Activated naive CD4-positive, alpha-beta T cell treated with anti-CD3 and anti-CD28 coated beads for 36 hours (primary cell): ENCODE measurements at regions of chr3 and their contacts with region 1.

Region 1: DNA sequence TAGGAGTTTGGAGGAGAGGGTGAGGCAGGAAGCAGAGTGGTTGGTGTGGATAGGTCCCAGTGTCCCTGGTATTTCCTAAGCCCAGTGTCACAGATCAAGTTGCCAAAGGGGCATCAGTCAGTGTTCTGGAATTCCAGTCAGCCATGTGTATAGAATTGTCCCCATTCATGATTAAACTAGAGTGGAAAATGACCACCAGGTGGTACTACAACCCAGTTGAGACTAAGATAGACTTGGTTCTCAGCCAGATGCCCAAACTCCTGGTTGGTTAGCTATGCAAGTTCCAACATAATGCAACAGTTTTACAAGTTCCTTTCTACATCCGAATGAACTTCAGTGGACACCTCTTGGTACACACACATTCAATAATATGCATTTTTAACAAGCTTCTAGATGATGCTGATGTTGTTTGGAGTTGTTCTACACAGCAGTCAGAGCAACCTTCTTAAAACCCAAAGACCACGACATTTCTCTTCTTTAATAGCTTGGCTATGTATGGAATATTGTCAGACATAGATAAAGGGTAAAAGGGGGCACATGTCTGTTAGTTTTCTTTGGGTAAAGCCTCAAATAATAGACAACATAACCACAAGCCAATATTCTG is 8.4 kb upstream of the ATR start:
- DNase-seq: peak; percentile 40
- H3K4me3 Mint-ChIP-seq: no peak overlapping the region
- H3K27ac Mint-ChIP-seq: no peak overlapping the region
- H3K4me1 Mint-ChIP-seq: no peaks in the 10 kb centered on the region
- H3K27me3 Mint-ChIP-seq: peaks cover 5% of the 10 kb centered on the region

Region 2: GRCh38 chr3:142628801-142629200 is 41.9 kb after region 1 on chr3:
- CTCF ChIA-PET with region 1: no interaction called
- intact Hi-C with region 1: no loop called
- DNase-seq: no peak
- H3K4me3 Mint-ChIP-seq: no peak overlapping the region
- H3K27ac Mint-ChIP-seq: no peak overlapping the region
- H3K4me1 Mint-ChIP-seq: peaks cover 5% of the 10 kb centered on the region
- H3K27me3 Mint-ChIP-seq: no peaks in the 10 kb centered on the region

Region 3: DNA sequence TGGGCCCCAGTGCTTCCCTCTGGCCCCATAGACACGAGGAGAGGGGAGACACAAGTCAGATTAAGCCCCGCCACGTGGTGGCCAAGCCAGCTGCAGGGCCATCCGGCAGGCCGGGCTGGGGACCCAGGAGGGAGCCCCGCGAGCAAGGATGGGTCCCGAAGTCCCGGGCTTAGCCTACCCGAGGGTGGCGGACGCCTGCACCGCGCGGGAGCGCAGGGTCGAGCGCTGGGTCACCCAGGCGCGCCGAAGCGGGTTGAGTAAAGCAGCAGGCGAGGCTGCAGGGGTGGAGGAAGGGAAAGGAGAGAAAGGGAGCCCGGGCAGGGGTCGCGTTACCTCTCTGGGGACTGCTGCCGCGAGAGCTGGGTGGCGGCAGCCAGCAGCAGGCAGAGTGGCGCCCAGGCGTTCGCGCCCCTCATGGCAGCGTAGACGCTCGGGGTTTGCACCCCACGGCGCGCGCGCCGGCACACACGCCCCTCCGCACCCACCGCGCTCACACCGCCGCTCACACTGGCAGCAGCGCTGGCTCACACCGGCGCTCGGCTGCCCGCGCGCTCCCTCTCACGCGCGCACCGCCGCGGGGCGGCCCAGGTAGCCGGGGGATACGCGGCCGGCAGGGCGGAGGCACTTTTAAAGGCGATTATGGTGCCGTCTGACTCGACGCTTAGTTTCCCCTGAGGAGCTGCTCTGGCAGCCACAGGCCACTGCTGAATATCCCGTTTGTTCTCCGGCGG is 301.7 kb after region 1 on chr3 and contains the start of gene PCOLCE2:
- CTCF ChIA-PET with region 1: interaction called, 3 read pairs
- intact Hi-C with region 1: loop called (anchors 5 kb)
- DNase-seq: peak; percentile 11
- H3K4me3 Mint-ChIP-seq: peak within 1 kb of the TSS; percentile 66
- H3K27ac Mint-ChIP-seq: no peak within 1 kb of the TSS
- H3K4me1 Mint-ChIP-seq: peaks cover 5% of the 10 kb centered on the region
- H3K27me3 Mint-ChIP-seq: peaks cover 44% of the 10 kb centered on the region
- total RNA-seq, gene PCOLCE2: 0.38 to 0.64 TPM

Region 4: DNA sequence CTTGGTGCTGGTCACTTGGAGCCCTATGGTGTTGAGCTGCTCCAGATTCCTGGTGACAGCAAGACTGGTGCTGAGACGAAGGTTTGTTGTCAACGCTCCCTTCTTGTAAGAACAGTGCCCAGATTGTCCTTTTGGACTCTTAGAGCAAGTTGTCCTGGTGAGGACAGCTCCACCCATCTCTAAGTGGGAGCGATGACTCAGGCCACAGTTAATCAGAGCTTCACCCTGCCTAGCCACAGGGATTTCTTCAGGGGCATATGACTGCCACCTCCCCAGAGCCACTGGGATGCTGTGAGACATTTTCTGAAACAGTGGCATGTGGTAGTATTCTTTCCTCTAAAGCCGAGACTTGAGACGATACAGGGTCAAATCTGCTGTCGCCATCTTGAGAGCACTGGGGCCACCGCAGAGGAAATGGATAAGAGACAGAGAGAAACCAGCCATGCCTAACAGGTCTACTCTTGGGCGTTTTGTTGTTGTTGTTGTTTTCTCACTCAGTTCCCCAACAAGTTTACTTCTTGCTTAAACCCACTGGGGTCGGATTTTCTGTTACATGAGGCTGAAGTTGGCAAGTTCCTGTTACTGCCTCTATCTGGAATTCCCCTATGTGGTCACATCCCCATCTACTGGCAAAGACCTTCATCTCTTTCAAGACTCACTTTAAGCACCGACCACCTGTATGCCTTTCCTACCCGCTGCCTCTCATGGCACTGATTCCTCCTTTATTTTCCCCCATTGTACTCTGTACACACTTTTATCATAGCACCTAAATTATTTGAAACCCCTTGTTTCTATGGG is 317.9 kb after region 1 on chr3:
- CTCF ChIA-PET with region 1: no interaction called
- intact Hi-C with region 1: loop called (anchors 5 kb)
- DNase-seq: peak; percentile 16
- H3K4me3 Mint-ChIP-seq: no peak overlapping the region
- H3K27ac Mint-ChIP-seq: no peak overlapping the region
- H3K4me1 Mint-ChIP-seq: peaks cover 8% of the 10 kb centered on the region
- H3K27me3 Mint-ChIP-seq: peaks cover 16% of the 10 kb centered on the region

Region 5: DNA sequence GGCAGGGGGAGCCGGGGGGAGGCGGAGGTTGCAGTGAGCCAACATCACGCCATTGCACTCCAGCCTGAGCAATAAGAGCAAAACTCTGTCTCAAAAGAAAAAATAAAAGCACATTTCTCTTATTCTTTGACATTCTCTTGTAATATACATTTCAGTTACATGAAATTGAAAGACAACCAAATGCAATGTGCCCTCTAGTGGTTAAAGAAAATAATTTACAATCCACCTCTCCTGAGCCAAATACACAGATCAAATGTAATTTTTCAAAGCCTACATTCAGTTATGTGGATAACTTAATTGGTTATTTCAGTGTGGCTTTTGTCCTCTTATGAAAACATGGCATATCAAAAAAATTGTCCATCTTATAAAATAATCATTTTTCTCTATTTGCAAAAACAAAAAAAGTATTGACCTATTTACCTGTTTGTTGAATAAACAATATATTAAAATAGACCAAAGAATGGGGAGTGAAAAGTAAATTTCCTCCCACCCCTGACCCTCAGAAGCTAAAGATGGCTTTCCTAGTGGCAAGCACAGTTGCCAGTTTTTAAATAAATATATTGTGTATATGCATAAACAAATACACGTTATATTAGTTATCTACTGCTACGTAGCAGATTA is 400.3 kb after region 1 on chr3:
- CTCF ChIA-PET with region 1: interaction called, 4 read pairs
- intact Hi-C with region 1: loop called (anchors 2 kb)
- DNase-seq: no peak
- H3K4me3 Mint-ChIP-seq: no peak overlapping the region
- H3K27ac Mint-ChIP-seq: no peak overlapping the region
- H3K4me1 Mint-ChIP-seq: no peaks in the 10 kb centered on the region
- H3K27me3 Mint-ChIP-seq: no peaks in the 10 kb centered on the region

Region 6: GRCh38 chr3:142993958-142994442 is 407.1 kb after region 1 on chr3:
- CTCF ChIA-PET with region 1: interaction called, 4 read pairs
- intact Hi-C with region 1: loop called (anchors 1 kb)
- DNase-seq: peak; percentile 77
- H3K4me3 Mint-ChIP-seq: no peak overlapping the region
- H3K27ac Mint-ChIP-seq: no peak overlapping the region
- H3K4me1 Mint-ChIP-seq: no peaks in the 10 kb centered on the region
- H3K27me3 Mint-ChIP-seq: peaks cover 4% of the 10 kb centered on the region

Region 7: DNA sequence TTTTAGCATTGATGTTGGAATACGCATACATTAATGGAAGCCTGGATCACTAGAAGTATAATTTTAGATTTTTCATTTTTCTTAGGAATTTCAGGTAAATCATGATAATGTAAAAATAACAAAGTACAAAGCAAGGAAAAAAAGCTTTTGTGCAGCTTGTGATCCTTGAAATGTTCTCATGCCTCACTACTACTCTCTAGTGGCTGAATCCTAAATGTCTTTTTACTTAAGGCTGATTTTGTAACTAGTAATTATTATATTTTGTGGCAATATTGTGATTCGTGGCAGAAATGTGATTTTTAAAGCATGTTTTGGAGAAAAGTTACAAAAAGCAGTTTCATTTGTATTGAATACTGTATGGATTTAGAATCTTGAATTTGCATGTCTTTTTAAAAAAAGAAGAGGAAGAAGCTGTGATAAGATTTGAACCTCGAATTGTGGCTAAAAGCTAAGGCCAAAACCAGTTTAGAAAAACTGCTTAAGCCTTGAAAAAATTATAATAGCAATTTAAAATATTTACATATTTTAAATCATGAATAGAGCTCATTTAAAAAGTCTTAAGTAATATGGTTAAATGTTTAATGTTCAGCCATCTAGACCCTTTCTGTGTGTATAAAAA is 453.5 kb after region 1 on chr3:
- CTCF ChIA-PET with region 1: no interaction called
- intact Hi-C with region 1: no loop called
- DNase-seq: no peak
- H3K4me3 Mint-ChIP-seq: no peak overlapping the region
- H3K27ac Mint-ChIP-seq: no peak overlapping the region
- H3K4me1 Mint-ChIP-seq: peaks cover 2% of the 10 kb centered on the region
- H3K27me3 Mint-ChIP-seq: no peaks in the 10 kb centered on the region